Head of caudate nucleus (tissue), 42 donors: ENCODE measurements at regions of chr6 and their contacts with region 1.

Region 1: GRCh38 chr6:56902641-56903464 is 52.1 kb upstream of the BEND6 start:
- DNase-seq: peak in 13 of 42 donors; percentile 2 to 46 (median 11)

Region 2: DNA sequence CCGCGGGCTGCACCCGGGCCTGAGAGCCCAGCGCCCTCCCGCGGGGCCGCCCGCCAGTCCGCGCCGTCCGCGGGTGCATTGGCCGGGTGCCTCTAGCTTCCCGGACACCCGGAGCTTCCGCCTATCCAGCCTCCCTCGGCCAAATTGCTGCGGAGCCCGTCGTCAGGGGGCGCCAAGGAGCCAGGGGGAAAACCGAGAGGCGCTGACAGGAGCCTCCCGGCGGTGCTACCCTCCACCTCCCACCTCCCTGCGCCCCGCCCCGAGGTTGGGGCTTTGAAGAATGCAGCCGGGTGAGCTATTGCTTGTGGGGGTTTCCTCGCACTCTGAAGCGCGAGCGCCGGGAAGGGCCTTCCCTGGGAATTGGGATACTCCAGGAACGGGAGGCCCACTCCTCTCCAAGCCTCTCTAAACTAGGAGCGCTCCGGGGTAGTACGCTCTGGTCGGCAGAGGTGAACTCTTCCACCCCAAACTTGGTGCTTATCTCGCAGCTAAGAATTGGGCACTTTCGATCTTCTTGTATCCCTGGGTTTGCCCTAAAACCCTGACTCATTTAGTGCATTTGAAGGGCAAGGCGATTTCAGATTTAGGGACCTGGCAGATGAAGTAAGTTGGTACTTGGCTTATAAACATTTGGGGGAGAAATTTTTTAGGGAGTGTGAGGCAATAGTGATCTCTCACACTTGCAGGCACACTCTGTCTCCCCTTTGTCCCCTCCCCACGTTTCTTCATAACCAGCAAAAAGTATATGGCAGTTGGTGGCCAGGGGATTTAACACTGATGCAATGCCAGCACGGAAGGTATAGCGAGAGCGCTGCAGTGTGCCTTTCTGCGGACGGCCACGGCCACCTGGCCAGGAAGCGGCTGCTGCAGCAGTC is 52.6 kb after region 1 on chr6:
- intact Hi-C with region 1: loop called (anchors 2 kb)
- DNase-seq: peak in 40 of 42 donors; percentile 64 to 94 (median 88)

Region 3: GRCh38 chr6:57021086-57021720 is 118.3 kb after region 1 on chr6:
- intact Hi-C with region 1: loop called (anchors 10 kb)
- DNase-seq: no peak